GM13977 (cell line): ENCODE measurements at regions of chr3 and their contacts with region 1.

Region 1: GRCh38 chr3:122679085-122679881 is 1.4 kb upstream of the PARP14 start:
- DNase-seq: peak; percentile 57
- CTCF ChIP-seq: peak; percentile 89

Region 2: GRCh38 chr3:122555275-122556071 is 123.8 kb before region 1 on chr3:
- in situ Hi-C with region 1: loop called (anchors 5 kb)
- DNase-seq: no peak
- CTCF ChIP-seq: no peak

Region 3: GRCh38 chr3:122609798-122610559 is 69.3 kb before region 1 on chr3:
- in situ Hi-C with region 1: no loop called
- DNase-seq: peak; percentile 80
- CTCF ChIP-seq: no peak